ENCODE measurements at regions of chr12 and their contacts with region 1.

Region 1: GRCh38 chr12:84842406-84843013 is 70.1 kb downstream of the SLC6A15 start:
- DNase-seq: peak; percentile 64
- H3K4me3 ChIP-seq: no peak overlapping the region
- H3K27ac ChIP-seq: no peak overlapping the region
- H3K4me1 ChIP-seq: no peaks in the 10 kb centered on the region
- H3K27me3 ChIP-seq: no peaks in the 10 kb centered on the region
- CTCF ChIP-seq: peak; percentile 81

Region 2: GRCh38 chr12:84507956-84508850 is 334.3 kb before region 1 on chr12:
- CTCF ChIA-PET with region 1: interaction called, 4 read pairs
- POLR2A ChIA-PET with region 1: interaction called, 3 read pairs
- intact Hi-C with region 1: loop called (anchors 2 kb)
- DNase-seq: peak; percentile 66
- H3K4me3 ChIP-seq: no peak overlapping the region
- H3K27ac ChIP-seq: no peak overlapping the region
- H3K4me1 ChIP-seq: peaks cover 4% of the 10 kb centered on the region
- H3K27me3 ChIP-seq: no peaks in the 10 kb centered on the region
- CTCF ChIP-seq: peak; percentile 56

Region 3: DNA sequence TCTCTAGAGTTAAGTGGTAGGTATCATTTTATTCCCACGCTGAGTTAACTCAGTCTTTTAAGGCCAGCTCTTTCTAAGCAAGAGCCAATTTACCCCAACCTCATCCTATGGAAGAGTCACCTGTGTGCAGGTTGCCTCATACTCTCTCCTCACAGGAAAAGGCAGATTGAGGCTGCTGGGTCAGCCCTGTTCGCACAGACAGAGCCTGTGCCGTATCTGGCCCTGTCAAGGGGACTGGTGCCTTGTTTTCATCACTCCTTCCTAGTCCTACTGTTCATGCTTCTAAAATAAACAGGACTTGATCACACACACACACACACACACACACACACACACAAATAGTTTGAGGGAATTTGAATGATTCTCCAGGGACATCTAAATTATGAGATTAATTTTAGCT is 214.9 kb before region 1 on chr12:
- CTCF ChIA-PET with region 1: no interaction called
- POLR2A ChIA-PET with region 1: no interaction called
- intact Hi-C with region 1: loop called (anchors 10 kb)
- DNase-seq: no peak
- H3K4me3 ChIP-seq: no peak overlapping the region
- H3K27ac ChIP-seq: no peak overlapping the region
- H3K4me1 ChIP-seq: no peaks in the 10 kb centered on the region
- H3K27me3 ChIP-seq: no peaks in the 10 kb centered on the region
- CTCF ChIP-seq: no peak

Region 4: GRCh38 chr12:84676787-84677186 is 165.7 kb before region 1 on chr12:
- CTCF ChIA-PET with region 1: no interaction called
- POLR2A ChIA-PET with region 1: no interaction called
- intact Hi-C with region 1: no loop called
- DNase-seq: no peak
- H3K4me3 ChIP-seq: no peak overlapping the region
- H3K27ac ChIP-seq: no peak overlapping the region
- H3K4me1 ChIP-seq: no peaks in the 10 kb centered on the region
- H3K27me3 ChIP-seq: no peaks in the 10 kb centered on the region
- CTCF ChIP-seq: no peak

Measured in A673 (cell line).